ENCODE measurements at regions of chr12 and their contacts with region 1.

Region 1: GRCh38 chr12:3299929-3300832 is 190.8 kb upstream of the PRMT8 start:
- DNase-seq: peak; percentile 60 to 94 (median 85)
- ATAC-seq: peak; percentile 91
- H3K4me3 ChIP-seq: peak overlapping the region in 1 of 2 donors; percentile 10
- H3K27ac ChIP-seq: peak overlapping the region in 1 of 2 donors; percentile 46
- H3K4me1 ChIP-seq: peaks cover 6 to 11% of the 10 kb centered on the region in 2 donors
- H3K27me3 ChIP-seq: peaks cover 0 to 43% of the 10 kb centered on the region in 2 donors
- CTCF ChIP-seq: peak; percentile 91 to 92

Region 2: GRCh38 chr12:3020850-3021435 is 279.2 kb before region 1 on chr12:
- intact Hi-C with region 1: no loop called
- DNase-seq: no peak
- ATAC-seq: no peak
- H3K4me3 ChIP-seq: no peak overlapping the region
- H3K27ac ChIP-seq: peak overlapping the region in 1 of 2 donors; percentile 28
- H3K4me1 ChIP-seq: no peaks in the 10 kb centered on the region
- H3K27me3 ChIP-seq: no peaks in the 10 kb centered on the region
- CTCF ChIP-seq: no peak

Region 3: DNA sequence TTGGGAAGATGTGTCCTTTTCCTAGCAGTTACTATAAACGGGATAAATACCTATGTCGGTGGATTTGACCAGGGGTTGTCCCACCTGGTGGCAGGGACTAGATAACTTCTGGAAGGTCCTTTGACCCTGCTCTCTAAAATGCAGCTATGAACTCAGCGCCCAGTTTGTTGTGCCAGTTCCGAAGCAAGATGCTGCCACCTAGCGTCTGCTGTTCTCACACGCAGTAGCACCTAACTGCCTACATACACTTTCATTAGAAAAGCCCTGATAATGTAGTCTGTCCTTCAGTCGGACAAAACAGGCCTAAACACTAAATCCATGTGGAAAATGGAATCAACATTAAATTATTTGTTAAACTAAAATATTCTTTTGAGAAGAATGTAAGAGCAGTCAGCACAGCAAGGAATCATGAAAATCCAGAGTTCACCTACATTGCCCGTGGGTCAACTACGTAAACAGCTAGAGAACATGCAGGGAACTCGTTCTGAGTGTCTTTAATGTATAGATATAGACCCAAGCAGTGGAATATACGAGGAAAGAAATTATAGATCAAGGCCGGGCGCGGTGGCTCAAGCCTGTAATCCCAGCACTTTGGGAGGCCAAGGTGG is 503.8 kb after region 1 on chr12:
- intact Hi-C with region 1: loop called in 1 of 2 experiments (anchors 10 kb)
- DNase-seq: peak; percentile 50 to 76 (median 68)
- ATAC-seq: peak; percentile 91
- H3K4me3 ChIP-seq: no peak overlapping the region
- H3K27ac ChIP-seq: no peak overlapping the region
- H3K4me1 ChIP-seq: no peaks in the 10 kb centered on the region
- H3K27me3 ChIP-seq: no peaks in the 10 kb centered on the region
- CTCF ChIP-seq: peak; percentile 84 to 85